ENCODE measurements at regions of chr7 and their contacts with region 1.

Region 1: DNA sequence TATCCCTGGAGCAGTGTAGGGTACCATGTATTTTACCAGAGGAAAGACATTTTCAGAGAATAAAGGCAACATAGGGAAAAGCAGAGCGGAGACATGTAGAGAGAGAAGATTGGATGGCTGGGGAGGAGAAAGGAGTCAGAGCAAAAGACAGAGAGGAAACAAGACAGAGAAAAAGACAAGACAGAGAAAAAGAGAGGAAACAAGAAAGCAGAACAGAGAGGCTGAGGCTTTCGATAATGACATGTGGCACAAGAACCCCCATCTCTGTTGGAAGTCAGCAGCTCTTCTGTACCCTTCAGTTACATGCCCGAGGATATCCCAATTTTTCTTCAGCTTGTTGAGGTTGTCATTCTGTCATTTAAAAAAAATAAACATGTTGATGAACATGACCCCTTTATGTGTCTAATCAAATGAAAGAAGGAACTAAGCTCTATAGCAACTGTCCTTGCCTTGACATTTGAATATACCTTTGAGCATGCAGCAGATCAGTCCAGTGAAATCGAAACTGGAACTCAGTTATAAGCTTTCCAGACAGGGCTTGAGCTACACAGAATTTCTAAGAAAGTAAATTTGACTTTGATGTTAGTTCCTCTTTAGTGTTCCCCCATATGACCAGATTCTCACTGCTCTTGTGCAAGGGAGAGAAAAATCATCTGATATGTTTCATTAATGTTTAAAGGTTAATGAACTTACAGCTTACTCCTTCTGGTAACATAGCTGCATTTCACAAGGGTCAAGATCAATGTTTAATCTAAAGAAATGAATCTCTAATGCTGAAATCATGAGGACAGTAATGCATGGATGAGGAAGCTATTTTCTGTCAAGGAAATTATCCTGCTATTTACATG is 75.1 kb upstream of the SP4 start:
- DNase-seq: no peak
- ATAC-seq: peak; percentile 86
- H3K4me3 Mint-ChIP-seq: peak overlapping the region; percentile 76
- H3K27ac Mint-ChIP-seq: peak overlapping the region; percentile 96
- H3K4me1 Mint-ChIP-seq: peaks cover 53% of the 10 kb centered on the region
- H3K27me3 Mint-ChIP-seq: no peaks in the 10 kb centered on the region

Region 2: DNA sequence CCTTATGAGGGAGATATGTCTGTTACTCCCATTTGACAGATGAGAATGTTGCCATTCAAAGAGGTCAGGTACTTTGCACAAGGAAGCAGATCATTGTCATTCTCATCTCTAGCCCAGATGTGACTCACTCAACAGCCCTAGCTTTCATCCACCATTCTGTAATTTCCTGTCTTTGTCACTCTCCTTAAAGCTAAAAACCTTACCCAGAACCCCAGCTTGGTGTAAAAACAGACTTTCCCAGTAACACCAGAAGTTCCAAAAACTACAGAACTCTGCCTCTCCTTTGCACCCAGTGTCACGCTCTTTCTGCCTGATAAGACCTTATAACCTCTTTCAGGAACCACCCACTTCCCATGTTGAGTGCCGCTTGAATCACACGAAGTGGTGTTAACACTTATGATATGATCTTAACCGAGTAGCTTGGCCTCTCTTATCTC is 14.0 kb before region 1 on chr7:
- POLR2A ChIA-PET with region 1: interaction called, 57 read pairs
- DNase-seq: no peak
- ATAC-seq: peak; percentile 97
- H3K4me3 Mint-ChIP-seq: peak overlapping the region; percentile 6
- H3K27ac Mint-ChIP-seq: peak overlapping the region; percentile 90
- H3K4me1 Mint-ChIP-seq: peaks cover 44% of the 10 kb centered on the region
- H3K27me3 Mint-ChIP-seq: no peaks in the 10 kb centered on the region

Region 3: GRCh38 chr7:21383227-21384220 is 30.8 kb after region 1 on chr7:
- POLR2A ChIA-PET with region 1: interaction called, 11 read pairs
- DNase-seq: no peak
- ATAC-seq: peak; percentile 63
- H3K4me3 Mint-ChIP-seq: peak overlapping the region; percentile 38
- H3K27ac Mint-ChIP-seq: peak overlapping the region; percentile 80
- H3K4me1 Mint-ChIP-seq: peaks cover 13% of the 10 kb centered on the region
- H3K27me3 Mint-ChIP-seq: no peaks in the 10 kb centered on the region

Measured in activated naive CD8-positive, alpha-beta T cell treated with anti-CD3 and anti-CD28 coated beads, Interleukin-2, amount 10 ng/mL, durations not matched to agents 7 days and 5 days (primary cell).